Psoas muscle (tissue), 8 donors: ENCODE measurements at regions of chr17 and their contacts with region 1.

Region 1: DNA sequence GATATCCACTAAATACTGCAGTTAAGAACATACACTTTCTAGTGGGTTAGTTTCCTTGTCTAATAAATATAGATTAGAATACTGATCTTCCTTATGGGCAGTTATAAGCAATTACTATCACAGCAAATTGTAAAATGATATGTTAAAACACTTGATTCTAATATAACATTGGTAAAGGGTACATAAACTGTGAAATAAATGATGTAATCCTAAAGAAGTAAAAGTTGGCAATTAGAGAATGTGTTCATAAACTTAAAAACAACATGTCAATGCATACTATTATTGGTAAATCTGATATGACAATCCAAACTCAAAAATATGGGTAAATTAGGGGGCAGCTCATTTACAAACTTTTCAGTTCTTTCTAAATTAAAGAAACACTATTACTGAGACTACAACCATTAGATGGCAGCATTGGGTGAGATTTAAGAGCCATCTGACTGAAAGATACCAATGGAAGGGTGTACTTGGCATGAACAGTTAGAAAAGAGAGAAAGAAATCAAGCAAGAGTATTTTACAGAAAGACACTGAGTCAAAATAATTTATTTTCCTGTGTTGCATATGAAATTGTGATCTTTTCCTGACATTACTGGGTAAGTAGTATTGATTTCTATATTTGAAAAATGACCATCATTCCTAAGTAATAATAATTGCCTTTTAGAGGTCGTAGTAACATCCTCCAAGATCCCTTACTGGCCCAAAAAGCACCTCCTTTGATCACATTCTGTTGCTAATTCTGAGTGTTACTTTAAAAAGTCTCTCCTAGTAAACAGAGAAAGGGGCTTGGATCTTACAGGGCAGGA is 119.6 kb downstream of the SPAG9 start:
- DNase-seq: no peak
- ATAC-seq: peak; percentile 60 to 81 (median 76)
- H3K4me3 ChIP-seq: no peak overlapping the region
- H3K27ac ChIP-seq: no peak overlapping the region
- H3K4me1 ChIP-seq: no peaks in the 10 kb centered on the region
- H3K27me3 ChIP-seq: no peaks in the 10 kb centered on the region
- CTCF ChIP-seq: peak; percentile 62

Region 2: GRCh38 chr17:50630524-50631194 is 370.4 kb before region 1 on chr17:
- intact Hi-C with region 1: no loop called
- DNase-seq: peak in 1 of 2 donors; percentile 64
- ATAC-seq: peak; percentile 63 to 70 (median 66)
- H3K4me3 ChIP-seq: no peak overlapping the region
- H3K27ac ChIP-seq: no peak overlapping the region
- H3K4me1 ChIP-seq: peaks cover 10% of the 10 kb centered on the region
- H3K27me3 ChIP-seq: peaks cover 0 to 57% (median 16%) of the 10 kb centered on the region in 3 donors
- CTCF ChIP-seq: peak; percentile 66

Region 3: DNA sequence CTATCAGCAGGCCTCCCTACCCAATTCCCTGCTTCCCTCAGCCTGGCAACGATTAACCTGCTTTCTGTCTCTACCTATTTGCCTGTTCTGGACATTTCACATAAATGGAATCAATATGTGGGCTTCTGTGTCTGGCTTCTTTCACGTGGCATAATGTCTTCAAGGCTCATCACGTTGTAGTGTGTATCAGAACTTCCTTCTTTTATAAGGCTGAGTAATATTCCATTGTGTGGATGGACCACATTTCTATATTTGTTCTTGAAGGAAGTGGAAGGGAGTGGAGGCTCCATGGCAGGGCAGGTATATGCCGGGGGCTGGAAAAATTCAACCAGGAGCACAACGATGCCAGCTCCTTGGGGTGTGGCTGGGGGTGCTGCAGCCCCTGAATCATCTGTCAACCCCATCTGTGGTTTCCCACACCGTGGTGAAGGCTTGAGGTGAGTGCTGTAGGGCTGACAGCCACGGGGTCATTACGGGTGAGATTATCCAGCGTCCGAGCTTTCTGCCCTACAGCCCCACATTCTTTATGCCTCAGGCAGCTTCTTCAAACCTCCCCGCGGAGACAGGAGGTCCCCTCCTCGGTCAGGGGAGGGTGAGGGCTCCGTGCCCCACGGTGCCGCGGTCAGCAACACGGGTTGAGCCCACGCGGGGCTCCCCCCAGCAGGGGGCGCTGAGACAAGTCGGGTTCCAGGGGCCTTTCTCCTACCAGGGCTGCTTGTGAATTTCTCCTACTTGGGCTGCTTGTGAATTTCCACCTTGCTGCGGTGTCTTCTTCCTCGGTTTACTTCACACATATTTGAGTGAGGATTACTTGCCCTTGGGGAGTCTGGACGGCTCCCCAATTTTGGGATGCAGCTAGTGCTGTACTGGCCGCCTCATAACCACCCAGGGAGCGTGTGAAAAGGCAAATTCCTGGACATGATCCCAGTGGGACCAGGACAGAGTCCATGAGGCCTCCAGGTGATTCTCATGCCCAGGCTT is 184.0 kb before region 1 on chr17:
- intact Hi-C with region 1: no loop called
- DNase-seq: peak; percentile 55 to 79
- ATAC-seq: peak; percentile 81 to 91 (median 82)
- H3K4me3 ChIP-seq: peak overlapping the region; percentile 47
- H3K27ac ChIP-seq: no peak overlapping the region
- H3K4me1 ChIP-seq: no peaks in the 10 kb centered on the region
- H3K27me3 ChIP-seq: peaks cover 0 to 5% (median 0%) of the 10 kb centered on the region in 3 donors
- CTCF ChIP-seq: peak; percentile 80

Region 4: DNA sequence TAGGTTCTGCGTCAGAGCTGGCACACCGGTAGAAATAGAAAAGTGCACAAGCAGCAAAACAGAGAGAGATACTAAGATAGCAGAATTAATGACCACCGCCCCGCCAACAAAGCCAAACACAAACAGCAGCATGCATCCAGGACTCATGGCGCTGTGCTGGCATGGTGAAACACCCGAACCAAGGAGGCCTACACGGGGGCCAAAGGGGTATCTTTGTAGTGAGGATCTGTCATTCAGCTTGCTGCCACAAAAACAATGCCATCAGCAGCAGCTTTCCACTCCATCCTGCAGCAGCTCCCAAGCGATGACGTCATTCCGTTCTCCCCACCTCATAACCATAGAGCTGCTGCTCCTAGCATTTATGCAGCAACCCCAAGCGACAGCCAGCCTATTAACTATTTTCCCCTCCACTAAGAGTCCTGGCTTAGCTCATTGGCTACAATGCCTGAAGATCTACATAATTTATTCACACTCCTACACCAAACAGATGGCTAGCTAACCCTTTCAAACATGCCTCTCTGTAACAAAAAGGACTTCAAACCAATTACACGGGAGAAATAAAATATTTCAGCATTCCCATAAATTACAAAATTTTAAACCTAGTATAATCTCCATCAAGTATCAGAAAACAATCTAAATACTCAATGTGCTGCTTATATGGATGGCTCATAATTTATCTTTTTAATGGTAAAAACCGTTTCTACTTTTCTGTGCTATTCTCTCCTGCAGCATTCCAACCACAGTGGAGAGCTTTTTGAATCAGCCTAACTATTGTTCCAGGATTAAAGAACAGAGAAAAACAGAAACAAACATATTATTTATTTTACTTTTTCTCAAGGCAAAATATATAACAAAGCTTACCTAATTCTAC is 45.7 kb after region 1 on chr17:
- intact Hi-C with region 1: no loop called
- DNase-seq: peak in 1 of 2 donors; percentile 38
- ATAC-seq: peak; percentile 32 to 79 (median 70)
- H3K4me3 ChIP-seq: peak overlapping the region; percentile 5
- H3K27ac ChIP-seq: no peak overlapping the region
- H3K4me1 ChIP-seq: peaks cover 7% of the 10 kb centered on the region
- H3K27me3 ChIP-seq: no peaks in the 10 kb centered on the region
- CTCF ChIP-seq: no peak

Region 5: DNA sequence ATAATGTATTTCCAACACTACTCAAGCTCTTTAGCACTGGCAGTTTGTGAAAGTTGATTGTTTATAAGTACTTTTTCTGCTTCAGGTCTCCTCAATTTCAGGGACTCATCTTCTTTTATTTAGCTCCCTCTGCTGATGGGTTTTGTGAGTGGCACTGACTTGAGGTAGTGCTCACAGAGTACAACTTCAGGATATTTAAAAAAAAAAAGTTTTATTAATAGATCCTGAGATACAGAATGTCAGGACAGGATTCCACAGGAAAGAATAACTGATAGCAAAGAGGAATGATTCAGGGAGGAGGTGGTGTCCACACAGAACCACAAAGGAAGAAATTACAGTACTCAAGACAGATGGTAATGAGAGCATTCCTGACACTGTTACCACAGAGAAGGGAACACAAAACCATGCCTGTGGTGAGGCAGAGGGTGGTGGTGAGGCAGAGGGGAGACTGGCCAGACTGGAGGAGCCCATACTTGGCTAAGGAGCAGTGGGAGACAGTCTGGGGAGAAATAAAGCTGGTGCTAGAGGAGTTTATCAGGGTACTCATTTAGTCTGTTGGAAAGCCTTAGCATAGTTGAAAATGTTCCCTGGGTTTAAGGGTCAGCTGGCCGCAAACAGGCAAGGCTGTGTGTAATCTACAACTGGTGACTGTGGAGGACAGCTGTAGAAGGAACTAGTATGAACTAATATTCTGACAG is 55.9 kb after region 1 on chr17:
- intact Hi-C with region 1: loop called in 1 of 2 experiments (anchors 5 kb)
- DNase-seq: peak in 1 of 2 donors; percentile 24
- ATAC-seq: peak; percentile 88 to 94 (median 92)
- H3K4me3 ChIP-seq: peak overlapping the region; percentile 13
- H3K27ac ChIP-seq: peak overlapping the region; percentile 84
- H3K4me1 ChIP-seq: peaks cover 39% of the 10 kb centered on the region
- H3K27me3 ChIP-seq: no peaks in the 10 kb centered on the region
- CTCF ChIP-seq: peak; percentile 58

Region 6: GRCh38 chr17:51153210-51154072 is 152.4 kb after region 1 on chr17 and contains the start of gene NME1:
- intact Hi-C with region 1: loop called (anchors 2 to 5 kb)
- DNase-seq: peak; percentile 92 to 97
- ATAC-seq: peak; percentile 93 to 95 (median 94)
- H3K4me3 ChIP-seq: peak within 1 kb of the TSS; percentile 88
- H3K27ac ChIP-seq: peak within 1 kb of the TSS; percentile 83
- H3K4me1 ChIP-seq: peaks cover 5% of the 10 kb centered on the region
- H3K27me3 ChIP-seq: no peaks in the 10 kb centered on the region
- CTCF ChIP-seq: peak; percentile 76
- total RNA-seq, gene NME1: 29.3 to 75.0 (median 50.9) TPM

Region 7: DNA sequence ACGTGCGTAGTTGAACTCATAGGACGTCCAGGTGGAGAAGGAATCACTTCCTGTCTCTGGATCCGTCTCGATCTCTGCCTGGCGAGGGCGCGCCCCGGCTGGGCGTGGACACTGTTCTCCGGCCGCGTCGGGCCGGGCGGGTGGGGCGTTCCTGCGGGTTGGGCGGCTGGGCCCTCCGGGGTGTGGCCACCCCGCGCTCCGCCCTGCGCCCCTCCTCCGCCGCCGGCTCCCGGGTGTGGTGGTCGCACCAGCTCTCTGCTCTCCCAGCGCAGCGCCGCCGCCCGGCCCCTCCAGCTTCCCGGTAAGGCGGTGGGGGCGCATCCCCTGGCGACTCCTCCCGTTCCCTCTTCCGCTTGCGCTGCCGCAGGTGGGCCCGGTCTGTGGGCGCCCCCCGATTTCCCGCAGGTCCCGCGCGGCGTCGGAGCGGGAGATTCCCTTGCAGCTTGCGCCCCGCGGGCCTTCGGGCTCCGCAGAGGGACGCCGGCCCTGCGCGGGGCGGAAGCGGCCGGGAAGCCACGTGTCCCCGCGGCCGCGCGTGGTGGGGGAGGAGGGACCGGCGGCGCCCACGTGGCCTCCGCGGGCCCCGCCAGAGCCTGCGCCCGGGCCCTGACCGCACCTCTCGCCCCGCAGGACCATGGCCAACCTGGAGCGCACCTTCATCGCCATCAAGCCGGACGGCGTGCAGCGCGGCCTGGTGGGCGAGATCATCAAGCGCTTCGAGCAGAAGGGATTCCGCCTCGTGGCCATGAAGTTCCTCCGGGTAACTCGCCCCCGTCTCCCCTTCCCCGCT is 165.4 kb after region 1 on chr17 and contains the start of gene NME2:
- intact Hi-C with region 1: loop called (anchors 5 kb)
- DNase-seq: peak; percentile 92 to 96
- ATAC-seq: peak; percentile 92 to 93 (median 92)
- H3K4me3 ChIP-seq: peak within 1 kb of the TSS; percentile 99
- H3K27ac ChIP-seq: peak within 1 kb of the TSS; percentile 100
- H3K4me1 ChIP-seq: peaks cover 16% of the 10 kb centered on the region
- H3K27me3 ChIP-seq: no peaks in the 10 kb centered on the region
- CTCF ChIP-seq: no peak
- total RNA-seq, gene NME2: 334 to 550 (median 422) TPM